ENCODE measurements at regions of chr5 and their contacts with region 1.

Region 1: GRCh38 chr5:149035372-149035790 is 27.5 kb downstream of the SH3TC2 start:
- DNase-seq: peak; percentile 41
- H3K4me3 Mint-ChIP-seq: no peak overlapping the region
- H3K27ac Mint-ChIP-seq: no peak overlapping the region
- H3K4me1 Mint-ChIP-seq: peaks cover 39% of the 10 kb centered on the region
- H3K27me3 Mint-ChIP-seq: peaks cover 5% of the 10 kb centered on the region

Region 2: GRCh38 chr5:148179234-148179824 is 856.1 kb before region 1 on chr5:
- intact Hi-C with region 1: loop called (anchors 2 kb)
- DNase-seq: no peak
- H3K4me3 Mint-ChIP-seq: no peak overlapping the region
- H3K27ac Mint-ChIP-seq: no peak overlapping the region
- H3K4me1 Mint-ChIP-seq: no peaks in the 10 kb centered on the region
- H3K27me3 Mint-ChIP-seq: peaks cover 7% of the 10 kb centered on the region

Region 3: GRCh38 chr5:148820461-148821395 is 214.7 kb before region 1 on chr5:
- intact Hi-C with region 1: loop called (anchors 1 kb)
- DNase-seq: no peak
- H3K4me3 Mint-ChIP-seq: no peak overlapping the region
- H3K27ac Mint-ChIP-seq: no peak overlapping the region
- H3K4me1 Mint-ChIP-seq: peaks cover 4% of the 10 kb centered on the region
- H3K27me3 Mint-ChIP-seq: peaks cover 51% of the 10 kb centered on the region

Region 4: DNA sequence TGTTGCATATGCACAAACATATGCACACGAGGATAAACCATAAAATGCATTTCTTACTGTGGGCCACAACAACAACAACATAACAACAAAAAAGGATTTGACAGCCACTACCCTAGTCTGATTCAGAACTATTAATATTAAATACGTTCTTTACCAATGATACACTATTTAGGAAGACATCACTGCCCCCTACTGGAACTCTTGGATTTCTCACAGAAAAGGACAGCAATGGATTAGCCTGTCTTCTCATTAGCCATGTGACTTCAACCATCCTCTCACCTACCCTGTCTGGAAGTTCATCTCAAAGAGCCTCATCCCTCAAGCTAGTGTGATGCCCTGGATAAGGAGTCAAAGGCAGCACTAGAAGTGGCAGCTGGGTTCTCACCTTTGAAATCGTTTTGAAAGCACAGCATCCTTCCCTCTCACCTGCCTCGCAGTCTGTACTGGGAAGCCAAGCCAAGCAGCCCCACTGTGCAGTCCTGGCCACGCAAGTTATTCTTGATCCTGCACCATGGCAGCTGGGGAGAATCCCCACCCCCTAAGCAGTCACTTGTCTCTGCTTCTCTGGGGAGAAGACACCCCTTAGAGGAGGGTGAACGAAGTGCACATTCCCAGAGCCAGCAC is 37.1 kb before region 1 on chr5:
- intact Hi-C with region 1: loop called (anchors 1 kb)
- DNase-seq: no peak
- H3K4me3 Mint-ChIP-seq: no peak overlapping the region
- H3K27ac Mint-ChIP-seq: no peak overlapping the region
- H3K4me1 Mint-ChIP-seq: no peaks in the 10 kb centered on the region
- H3K27me3 Mint-ChIP-seq: peaks cover 11% of the 10 kb centered on the region

Region 5: DNA sequence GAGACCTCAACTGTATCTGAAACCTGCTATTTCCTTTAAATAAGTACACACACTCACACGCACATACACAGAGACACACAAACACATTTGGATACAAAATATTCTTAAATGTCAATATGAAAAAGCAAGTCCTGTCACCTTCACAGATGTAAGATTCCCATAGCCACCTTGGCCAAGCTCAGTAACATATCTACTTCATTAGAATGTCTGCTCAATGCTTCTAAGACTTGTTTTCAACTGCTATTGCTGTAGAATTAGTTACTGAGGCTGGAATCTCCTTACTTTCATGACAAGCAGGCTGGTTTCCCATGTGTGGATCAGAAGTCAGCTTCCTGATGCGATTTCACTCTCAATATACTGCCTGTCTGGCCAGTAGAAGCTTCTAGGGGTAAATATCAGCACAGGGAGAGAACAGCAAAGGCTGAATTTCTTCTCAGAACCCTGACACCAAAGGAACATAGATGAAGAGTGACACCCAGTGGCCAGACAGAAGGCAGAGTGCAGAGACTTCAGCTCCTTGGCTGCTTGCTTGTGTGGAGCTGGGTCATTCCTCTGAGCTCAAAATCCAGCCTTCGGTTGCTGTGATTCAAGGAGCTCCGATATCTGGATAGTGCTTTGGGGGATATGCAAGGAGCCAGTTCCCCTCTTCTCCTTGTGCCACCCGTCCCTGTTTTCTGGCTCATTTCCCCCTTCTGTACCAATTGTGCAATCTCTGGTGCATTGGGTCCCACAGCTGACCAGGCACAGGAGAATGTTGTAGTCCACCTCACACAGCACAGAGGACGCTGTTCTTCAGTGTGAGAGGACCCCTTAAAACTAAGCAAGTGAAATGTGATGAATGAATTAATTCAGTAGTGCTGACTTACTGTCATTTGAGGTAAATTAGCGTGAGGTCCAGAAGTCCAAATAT is 79.3 kb after region 1 on chr5:
- intact Hi-C with region 1: loop called (anchors 1 kb)
- DNase-seq: peak; percentile 3
- H3K4me3 Mint-ChIP-seq: no peak overlapping the region
- H3K27ac Mint-ChIP-seq: no peak overlapping the region
- H3K4me1 Mint-ChIP-seq: no peaks in the 10 kb centered on the region
- H3K27me3 Mint-ChIP-seq: peaks cover 29% of the 10 kb centered on the region

Measured in activated T-helper 1 cell treated with anti-CD3 and anti-CD28 coated beads, Interleukin-12 subunit alpha, Interleukin-12 subunit beta, Interleukin-2, Interleukin-4 antibody, amounts not matched to agents 30 ng/mL and 10 ng/mL and 1 ng/mL, durations not matched to agents 14 hours and 24 hours and 36 hours (primary cell).